BJ (cell line): ENCODE measurements at regions of chr6 and their contacts with region 1.

Region 1: DNA sequence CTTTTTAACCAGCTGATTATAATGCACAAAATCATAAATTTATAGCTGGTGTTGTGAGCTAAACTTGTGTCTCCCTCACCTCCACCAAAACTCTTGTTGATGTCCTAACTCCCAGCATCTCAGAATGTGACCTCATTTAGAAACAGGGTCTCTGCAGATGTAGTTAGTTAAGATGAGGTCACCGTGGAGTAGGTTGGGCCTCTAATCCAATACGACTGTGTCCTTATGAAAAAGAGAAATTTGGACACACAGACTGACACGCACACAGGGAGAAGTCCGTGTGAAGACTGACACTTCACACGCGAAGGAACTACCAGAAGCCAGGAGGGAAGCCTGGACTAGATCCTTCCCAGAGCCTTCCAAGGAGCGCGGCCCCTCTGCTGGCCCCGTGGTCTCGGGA is 46.5 kb downstream of the TRAM2 start:
- DNase-seq: no peak
- H3K4me3 ChIP-seq: no peak overlapping the region
- H3K27me3 ChIP-seq: no peaks in the 10 kb centered on the region
- CTCF ChIP-seq: no peak

Region 2: GRCh38 chr6:52514514-52514913 is 15.8 kb before region 1 on chr6:
- CTCF ChIA-PET with region 1: interaction called, 4 read pairs
- POLR2A ChIA-PET with region 1: interaction called, 27 read pairs
- DNase-seq: no peak
- H3K4me3 ChIP-seq: no peak overlapping the region
- H3K27me3 ChIP-seq: no peaks in the 10 kb centered on the region
- CTCF ChIP-seq: no peak

Region 3: GRCh38 chr6:52603000-52603795 is 72.8 kb after region 1 on chr6:
- CTCF ChIA-PET with region 1: no interaction called
- POLR2A ChIA-PET with region 1: no interaction called
- DNase-seq: no peak
- H3K4me3 ChIP-seq: no peak overlapping the region
- H3K27me3 ChIP-seq: no peaks in the 10 kb centered on the region
- CTCF ChIP-seq: no peak

Region 4: GRCh38 chr6:52718550-52718949 is 188.2 kb after region 1 on chr6:
- CTCF ChIA-PET with region 1: no interaction called
- POLR2A ChIA-PET with region 1: interaction called, 18 read pairs
- DNase-seq: no peak
- H3K4me3 ChIP-seq: no peak overlapping the region
- H3K27me3 ChIP-seq: no peaks in the 10 kb centered on the region
- CTCF ChIP-seq: no peak

Region 5: GRCh38 chr6:52964318-52964717 is 434.0 kb after region 1 on chr6:
- CTCF ChIA-PET with region 1: no interaction called
- POLR2A ChIA-PET with region 1: no interaction called
- DNase-seq: no peak
- H3K4me3 ChIP-seq: no peak overlapping the region
- H3K27me3 ChIP-seq: no peaks in the 10 kb centered on the region
- CTCF ChIP-seq: no peak